ENCODE measurements at regions of chr2 and their contacts with region 1.

Region 1: GRCh38 chr2:99141110-99142108 is at the start of gene C2orf15:
- DNase-seq: peak; percentile 90 to 96 (median 93)
- ATAC-seq: peak; percentile 96 to 99 (median 98)
- H3K4me3 ChIP-seq: peak within 1 kb of the TSS; percentile 62 to 99 (median 91)
- H3K27ac ChIP-seq: peak within 1 kb of the TSS in 11 of 12 donors; percentile 43 to 88 (median 75)
- H3K4me1 ChIP-seq: peaks cover 0 to 15% (median 4%) of the 10 kb centered on the region in 12 donors
- H3K27me3 ChIP-seq: no peaks in the 10 kb centered on the region
- CTCF ChIP-seq: no peak
- POLR2A ChIP-seq: peak in 1 of 2 donors; percentile 97
- total RNA-seq, gene C2orf15: 0.29 to 0.70 (median 0.69) TPM in 3 of 9 donors, not detected in the others

Region 2: GRCh38 chr2:99101697-99102096 is 39.7 kb before region 1 on chr2:
- intact Hi-C with region 1: no loop called
- DNase-seq: no peak
- ATAC-seq: no peak
- H3K4me3 ChIP-seq: peak overlapping the region in 1 of 12 donors; percentile 13
- H3K27ac ChIP-seq: no peak overlapping the region
- H3K4me1 ChIP-seq: no peaks in the 10 kb centered on the region
- H3K27me3 ChIP-seq: no peaks in the 10 kb centered on the region
- CTCF ChIP-seq: no peak
- POLR2A ChIP-seq: no peak

Region 3: DNA sequence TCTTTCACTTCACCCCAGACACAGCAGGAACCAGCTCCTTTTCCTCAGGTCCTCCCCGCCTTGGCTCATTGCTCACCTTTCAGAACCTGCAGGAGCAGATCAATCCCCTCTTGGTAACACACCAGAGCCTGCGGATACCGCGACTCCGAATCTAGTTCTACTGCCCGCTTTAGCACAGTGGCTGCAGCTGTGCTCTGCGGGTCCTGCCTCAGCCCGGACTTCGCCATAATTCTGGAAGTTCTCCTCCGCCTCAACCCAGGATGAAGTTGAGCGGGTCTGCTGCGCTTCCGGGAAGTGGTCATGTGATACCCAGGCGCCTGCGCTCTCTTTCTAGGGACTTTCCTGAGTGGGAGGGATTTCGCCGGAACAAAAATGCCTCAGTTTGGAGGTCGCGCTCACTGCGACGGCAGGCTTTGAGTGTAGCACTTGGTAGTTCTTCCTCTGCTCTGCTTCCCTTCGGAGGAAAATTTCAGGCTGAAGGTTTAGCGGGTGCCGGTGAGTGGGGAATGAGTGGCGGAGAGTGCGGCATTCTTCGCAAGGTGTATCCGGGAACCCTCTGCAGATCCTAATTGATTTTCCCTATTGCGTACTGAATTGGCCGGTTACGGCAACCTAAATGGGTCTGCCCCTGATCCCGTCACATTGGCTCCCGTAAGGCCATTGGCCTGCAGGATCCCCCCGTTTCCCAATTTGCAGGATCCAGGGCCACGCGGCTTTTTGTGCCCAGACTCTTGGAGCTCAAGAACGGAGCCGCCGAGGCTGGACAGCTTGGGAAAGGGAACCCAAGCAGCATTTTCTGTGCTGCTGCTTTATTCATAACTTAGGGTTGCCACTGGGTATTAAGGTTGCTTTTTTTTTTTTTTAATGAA is 39.6 kb after region 1 on chr2 and contains the starts of genes MITD1 and MRPL30:
- intact Hi-C with region 1: loop called in 1 of 10 experiments (anchors 5 kb)
- DNase-seq: peak; percentile 92 to 94 (median 93)
- ATAC-seq: peak; percentile 98 to 99 (median 98)
- H3K4me3 ChIP-seq: peak within 1 kb of the TSS; percentile 66 to 92 (median 80)
- H3K27ac ChIP-seq: peak within 1 kb of the TSS in 11 of 12 donors; percentile 57 to 92 (median 78)
- H3K4me1 ChIP-seq: peaks cover 4 to 56% (median 28%) of the 10 kb centered on the region in 12 donors
- H3K27me3 ChIP-seq: no peaks in the 10 kb centered on the region
- CTCF ChIP-seq: no peak
- POLR2A ChIP-seq: peak in 1 of 2 donors; percentile 77
- total RNA-seq, gene MITD1: 8.4 to 16.4 (median 14.0) TPM
- total RNA-seq, gene MRPL30: 26.4 to 38.3 (median 34.3) TPM